Psoas muscle (tissue), 8 donors: ENCODE measurements at regions of chr9 and their contacts with region 1.

Region 1: GRCh38 chr9:35014517-35014916 is 25.0 kb downstream of the DNAJB5 start:
- DNase-seq: no peak
- ATAC-seq: peak in 3 of 4 donors; percentile 27 to 59 (median 36)
- H3K4me3 ChIP-seq: no peak overlapping the region
- H3K27ac ChIP-seq: no peak overlapping the region
- H3K4me1 ChIP-seq: no peaks in the 10 kb centered on the region
- H3K27me3 ChIP-seq: no peaks in the 10 kb centered on the region
- CTCF ChIP-seq: no peak

Region 2: GRCh38 chr9:35051069-35051967 is 36.8 kb after region 1 on chr9:
- intact Hi-C with region 1: loop called in 1 of 2 experiments (anchors 5 kb)
- DNase-seq: peak; percentile 30 to 70
- ATAC-seq: peak; percentile 88 to 92 (median 90)
- H3K4me3 ChIP-seq: no peak overlapping the region
- H3K27ac ChIP-seq: peak overlapping the region; percentile 74
- H3K4me1 ChIP-seq: peaks cover 5% of the 10 kb centered on the region
- H3K27me3 ChIP-seq: no peaks in the 10 kb centered on the region
- CTCF ChIP-seq: peak; percentile 76

Region 3: DNA sequence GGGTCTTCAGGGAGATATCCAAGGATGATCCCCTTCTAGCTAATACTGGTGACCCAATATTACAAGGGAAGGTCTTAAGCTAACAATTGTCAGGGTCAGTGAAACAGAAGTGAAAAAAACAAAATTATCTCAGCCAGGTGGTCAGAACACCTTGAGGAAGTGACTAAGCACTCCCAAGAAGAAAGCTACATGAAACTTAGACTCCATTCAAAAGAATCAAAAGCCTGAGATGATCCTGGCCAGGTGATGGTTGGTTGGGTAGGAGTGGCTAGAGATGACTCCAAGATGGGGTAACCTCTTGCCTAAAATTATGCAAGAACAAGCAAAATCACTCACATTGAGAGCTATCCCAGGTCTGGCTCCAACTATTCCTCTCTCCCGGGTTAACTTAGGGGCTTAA is 52.5 kb after region 1 on chr9:
- intact Hi-C with region 1: no loop called
- DNase-seq: no peak
- ATAC-seq: no peak
- H3K4me3 ChIP-seq: no peak overlapping the region
- H3K27ac ChIP-seq: no peak overlapping the region
- H3K4me1 ChIP-seq: peaks cover 29% of the 10 kb centered on the region
- H3K27me3 ChIP-seq: no peaks in the 10 kb centered on the region
- CTCF ChIP-seq: no peak